Aorta (tissue), 5 donors: ENCODE measurements at regions of chr3 and their contacts with region 1.

Region 1: DNA sequence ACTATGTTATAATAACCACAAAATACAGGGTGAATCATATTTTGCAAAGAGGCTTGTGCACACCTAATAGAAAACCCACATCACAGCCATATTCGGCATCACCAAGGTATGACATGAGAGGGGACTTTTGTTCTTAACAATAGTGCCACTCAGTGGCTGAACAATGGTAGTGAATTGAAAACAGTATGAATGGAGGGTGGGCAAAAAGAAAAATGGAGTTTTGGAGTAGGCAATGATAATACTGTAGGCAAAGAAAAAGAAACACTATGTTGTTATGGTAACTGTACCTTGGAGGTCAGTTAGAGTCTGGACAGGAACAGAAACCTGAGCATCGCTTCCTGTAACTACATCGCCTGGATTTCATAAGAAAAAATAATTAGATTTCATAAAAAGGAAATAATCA is 348.6 kb downstream of the PLCL2 start:
- DNase-seq: no peak
- ATAC-seq: peak; percentile 76
- H3K4me3 ChIP-seq: no peak overlapping the region
- H3K27ac ChIP-seq: no peak overlapping the region
- H3K4me1 ChIP-seq: peaks cover 0 to 4% of the 10 kb centered on the region in 2 donors
- H3K27me3 ChIP-seq: no peaks in the 10 kb centered on the region

Region 2: GRCh38 chr3:17032407-17033034 is 200.9 kb before region 1 on chr3:
- intact Hi-C with region 1: loop called in 1 of 2 experiments (anchors 10 kb)
- DNase-seq: no peak
- ATAC-seq: peak; percentile 75
- H3K4me3 ChIP-seq: no peak overlapping the region
- H3K27ac ChIP-seq: no peak overlapping the region
- H3K4me1 ChIP-seq: no peaks in the 10 kb centered on the region
- H3K27me3 ChIP-seq: no peaks in the 10 kb centered on the region

Region 3: DNA sequence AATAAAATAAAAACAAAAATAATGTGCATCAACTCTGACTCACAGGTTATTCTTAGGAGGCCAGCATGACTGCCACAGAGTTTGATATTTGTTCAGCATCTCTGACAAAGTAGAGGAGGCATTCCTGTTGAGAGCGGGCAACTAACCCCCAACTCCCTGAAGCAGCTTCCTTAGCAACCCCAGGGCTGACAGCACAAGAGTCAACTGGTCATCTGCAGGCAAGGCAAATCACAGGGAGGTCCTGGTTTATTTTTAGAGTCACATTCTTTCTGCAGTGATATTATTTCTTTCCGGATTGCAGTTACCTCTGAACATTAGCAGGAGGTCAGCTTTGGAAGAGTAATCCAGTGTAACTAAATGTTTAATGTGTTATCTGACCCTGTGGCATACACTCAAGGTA is 75.7 kb before region 1 on chr3:
- intact Hi-C with region 1: loop called in 1 of 2 experiments (anchors 5 kb)
- DNase-seq: no peak
- ATAC-seq: peak; percentile 40
- H3K4me3 ChIP-seq: no peak overlapping the region
- H3K27ac ChIP-seq: no peak overlapping the region
- H3K4me1 ChIP-seq: no peaks in the 10 kb centered on the region
- H3K27me3 ChIP-seq: no peaks in the 10 kb centered on the region

Region 4: DNA sequence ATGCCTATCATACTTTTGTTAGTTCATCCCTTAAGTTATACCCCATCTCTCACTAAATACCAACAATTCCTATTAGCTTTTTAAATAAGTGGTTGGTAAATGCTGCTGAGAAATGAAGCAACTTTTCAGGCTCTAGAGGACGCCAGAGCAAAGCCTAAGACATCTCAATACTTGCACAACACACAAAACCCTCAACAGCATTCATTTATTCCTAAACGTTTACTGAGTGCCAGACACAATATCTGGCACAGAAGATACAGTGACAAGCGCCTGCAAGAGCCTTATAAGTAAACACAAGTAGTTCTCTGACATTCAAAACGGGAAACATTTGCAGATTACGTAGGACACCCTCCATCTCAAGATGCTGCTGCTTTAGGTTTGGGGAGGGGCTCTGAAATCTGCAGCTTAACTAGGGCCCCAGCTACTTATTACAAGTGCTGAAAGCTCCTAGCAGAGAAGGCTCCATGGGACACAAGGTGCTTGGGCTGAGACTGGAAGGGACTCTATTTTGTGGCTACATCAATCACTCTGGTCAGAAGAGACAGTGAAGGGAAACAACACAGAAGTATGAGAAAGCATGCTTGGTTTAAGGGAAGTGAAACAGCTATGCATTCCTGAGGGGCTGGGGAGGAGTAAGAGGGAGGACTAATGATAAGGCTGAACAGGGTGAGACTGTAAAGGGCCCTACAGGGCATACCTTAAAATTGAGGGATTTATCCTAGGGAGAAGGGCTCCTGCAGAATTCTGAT is 37.4 kb before region 1 on chr3:
- intact Hi-C with region 1: loop called in 1 of 2 experiments (anchors 5 kb)
- DNase-seq: no peak
- ATAC-seq: peak; percentile 46
- H3K4me3 ChIP-seq: no peak overlapping the region
- H3K27ac ChIP-seq: peak overlapping the region in 1 of 2 donors; percentile 55
- H3K4me1 ChIP-seq: peaks cover 3 to 12% of the 10 kb centered on the region in 2 donors
- H3K27me3 ChIP-seq: no peaks in the 10 kb centered on the region

Region 5: DNA sequence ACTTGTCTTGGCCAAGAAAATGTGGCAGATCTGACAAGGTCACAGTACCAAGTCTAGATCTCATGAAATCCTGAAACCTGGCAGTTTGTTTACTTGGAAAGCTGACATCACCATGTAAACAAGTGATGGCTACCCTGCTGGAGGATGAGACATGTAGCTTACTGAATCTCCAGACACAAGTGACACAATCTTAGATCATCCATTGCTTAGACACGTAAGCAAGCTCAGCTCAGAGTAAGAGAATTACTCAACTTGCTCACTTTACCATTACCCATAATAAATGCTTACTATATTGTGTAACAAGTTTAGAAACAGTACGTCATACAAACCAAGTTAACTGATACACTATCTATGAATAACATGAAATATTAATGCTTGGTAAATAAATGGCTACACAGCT is 245.3 kb after region 1 on chr3:
- intact Hi-C with region 1: no loop called
- DNase-seq: no peak
- ATAC-seq: no peak
- H3K4me3 ChIP-seq: no peak overlapping the region
- H3K27ac ChIP-seq: no peak overlapping the region
- H3K4me1 ChIP-seq: no peaks in the 10 kb centered on the region
- H3K27me3 ChIP-seq: no peaks in the 10 kb centered on the region